PC-9 (cell line): ENCODE measurements at regions of chr1 and their contacts with region 1.

Region 1: DNA sequence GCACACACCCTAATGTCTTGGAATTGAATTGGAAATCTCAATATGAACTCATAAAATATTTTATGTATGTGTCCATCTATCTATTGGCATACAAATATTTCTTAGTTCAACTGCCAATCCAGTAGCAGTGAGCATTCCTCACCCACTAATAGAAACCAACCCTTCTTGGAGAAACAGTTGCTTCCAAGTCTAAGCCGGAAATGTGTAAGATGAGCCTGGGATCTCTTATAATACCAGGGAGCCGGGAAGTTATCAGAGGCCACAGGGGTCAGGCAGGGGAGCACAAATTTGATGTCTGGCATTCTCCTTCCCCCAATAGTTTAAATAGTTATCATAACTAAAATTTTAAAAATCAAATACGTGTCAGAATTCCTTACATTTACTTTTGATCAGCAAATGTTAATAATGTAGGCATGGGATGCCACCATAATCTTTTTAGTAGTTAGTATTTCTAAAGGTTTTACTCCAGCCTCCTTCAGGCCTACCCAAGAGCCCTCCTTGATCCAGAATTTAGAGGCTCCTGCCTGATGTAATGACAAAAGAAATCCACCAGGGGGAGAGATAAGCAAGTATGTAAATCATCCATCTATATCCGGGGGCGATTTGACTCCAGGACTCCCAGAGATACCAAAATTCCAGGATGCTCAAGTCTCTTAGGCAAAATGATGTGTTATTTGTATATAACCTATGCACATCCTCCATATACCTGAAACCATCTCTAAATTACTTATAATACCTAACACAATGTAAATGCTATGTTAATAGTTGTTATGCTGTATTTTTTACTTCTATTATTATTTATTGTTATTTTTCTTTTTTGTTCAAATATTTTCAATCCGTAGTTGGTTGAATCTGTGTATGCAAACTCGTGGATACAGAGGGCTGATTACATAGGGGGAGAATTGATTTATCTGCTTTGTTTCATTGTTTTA is 218.7 kb upstream of the COA6 start:
- DNase-seq: peak; percentile 29 to 59
- H3K4me3 ChIP-seq: no peak overlapping the region
- H3K27ac ChIP-seq: no peak overlapping the region
- H3K4me1 ChIP-seq: no peaks in the 10 kb centered on the region
- H3K27me3 ChIP-seq: no peaks in the 10 kb centered on the region
- CTCF ChIP-seq: peak; percentile 97

Region 2: GRCh38 chr1:234139966-234140365 is 14.6 kb before region 1 on chr1:
- CTCF ChIA-PET with region 1: no interaction called
- POLR2A ChIA-PET with region 1: no interaction called
- intact Hi-C with region 1: no loop called
- DNase-seq: peak; percentile 22 to 45
- H3K4me3 ChIP-seq: no peak overlapping the region
- H3K27ac ChIP-seq: no peak overlapping the region
- H3K4me1 ChIP-seq: no peaks in the 10 kb centered on the region
- H3K27me3 ChIP-seq: no peaks in the 10 kb centered on the region
- CTCF ChIP-seq: no peak

Region 3: GRCh38 chr1:234214129-234214910 is 59.7 kb after region 1 on chr1:
- CTCF ChIA-PET with region 1: no interaction called
- POLR2A ChIA-PET with region 1: no interaction called
- intact Hi-C with region 1: loop called (anchors 2 kb)
- DNase-seq: peak in 1 of 2 experiments; percentile 63
- H3K4me3 ChIP-seq: peak overlapping the region; percentile 84
- H3K27ac ChIP-seq: no peak overlapping the region
- H3K4me1 ChIP-seq: peaks cover 13% of the 10 kb centered on the region
- H3K27me3 ChIP-seq: no peaks in the 10 kb centered on the region
- CTCF ChIP-seq: no peak

Region 4: GRCh38 chr1:234309598-234310459 is 155.2 kb after region 1 on chr1:
- CTCF ChIA-PET with region 1: no interaction called
- POLR2A ChIA-PET with region 1: no interaction called
- intact Hi-C with region 1: loop called (anchors 1 kb)
- DNase-seq: peak; percentile 58 to 67
- H3K4me3 ChIP-seq: no peak overlapping the region
- H3K27ac ChIP-seq: no peak overlapping the region
- H3K4me1 ChIP-seq: peaks cover 2% of the 10 kb centered on the region
- H3K27me3 ChIP-seq: no peaks in the 10 kb centered on the region
- CTCF ChIP-seq: peak; percentile 92

Region 5: GRCh38 chr1:234326497-234327366 is 172.1 kb after region 1 on chr1:
- CTCF ChIA-PET with region 1: no interaction called
- POLR2A ChIA-PET with region 1: no interaction called
- intact Hi-C with region 1: loop called (anchors 5 kb)
- DNase-seq: peak in 1 of 2 experiments; percentile 53
- H3K4me3 ChIP-seq: no peak overlapping the region
- H3K27ac ChIP-seq: no peak overlapping the region
- H3K4me1 ChIP-seq: no peaks in the 10 kb centered on the region
- H3K27me3 ChIP-seq: no peaks in the 10 kb centered on the region
- CTCF ChIP-seq: peak; percentile 87